ENCODE measurements at regions of chr6 and their contacts with region 1.

Region 1: DNA sequence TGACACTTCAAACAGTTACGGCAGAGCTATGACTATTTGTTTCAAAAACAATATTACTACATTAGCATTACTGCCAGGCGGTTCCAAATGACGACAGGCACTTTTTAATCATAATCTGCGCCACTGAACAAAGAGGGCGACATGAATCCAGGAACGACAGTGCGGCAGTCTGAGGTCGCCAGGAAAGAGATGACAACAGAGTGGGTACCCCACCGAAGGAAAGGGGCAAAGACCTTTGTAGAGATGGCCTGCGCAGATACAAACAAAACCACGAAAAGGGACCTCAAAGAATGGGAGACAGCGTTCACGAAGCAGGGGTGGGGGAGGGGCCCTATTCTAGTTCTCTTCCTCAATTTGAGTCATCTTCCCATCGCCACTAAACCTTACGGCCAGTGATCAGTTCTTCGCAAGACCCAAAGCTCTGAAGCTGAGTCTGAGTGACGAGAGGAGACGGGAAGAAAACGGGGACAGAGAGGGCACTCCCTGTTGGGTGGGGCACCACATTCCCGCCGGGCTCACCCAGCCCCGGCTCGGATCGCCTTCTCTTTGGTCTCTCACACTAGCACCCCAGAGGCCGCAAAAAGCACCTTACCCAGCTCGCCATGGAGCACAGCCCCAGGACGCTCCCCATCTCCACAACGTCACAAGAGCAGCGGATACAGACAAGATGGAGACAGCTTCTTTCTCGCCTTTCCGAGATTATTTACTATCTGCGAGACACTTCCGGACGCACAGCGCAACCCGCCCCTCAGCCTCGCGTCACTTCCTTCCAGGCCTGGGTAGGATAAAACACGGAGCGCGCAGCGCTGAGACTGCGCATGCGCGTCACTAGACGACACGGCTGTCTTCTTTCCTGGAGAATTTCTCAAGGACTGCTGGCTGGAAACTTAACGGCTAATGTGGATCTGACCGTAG is at the start of gene SERINC1:
- DNase-seq: peak; percentile 93 to 96 (median 95)
- H3K4me3 ChIP-seq: peak within 1 kb of the TSS; percentile 59 to 100 (median 89)
- H3K27ac ChIP-seq: peak within 1 kb of the TSS; percentile 63 to 99 (median 95)
- H3K27me3 ChIP-seq: no peaks in the 10 kb centered on the region
- CTCF ChIP-seq: peak in 25 of 56 donors; percentile 3 to 55 (median 21)
- total RNA-seq, gene SERINC1: 227 to 682 (median 537) TPM

Region 2: DNA sequence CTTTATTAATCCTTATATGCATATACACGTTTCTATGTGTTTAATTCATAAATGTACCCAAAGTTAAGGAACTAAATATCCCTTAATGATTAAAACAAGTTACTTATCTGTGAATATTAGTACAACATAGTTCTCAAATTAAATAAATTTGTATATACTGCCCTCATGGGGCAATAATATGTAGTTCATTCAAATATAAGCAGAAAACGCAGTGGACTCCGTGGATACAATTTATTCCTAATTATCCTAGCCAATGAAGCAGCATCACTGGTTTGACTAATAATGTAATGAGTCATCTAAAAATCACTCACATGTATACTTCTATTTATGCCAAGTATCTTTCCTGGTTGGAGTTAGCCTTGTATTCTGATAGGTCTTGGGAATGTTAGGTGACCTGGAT is 1248.7 kb before region 1 on chr6:
- intact Hi-C with region 1: no loop called
- DNase-seq: no peak
- H3K4me3 ChIP-seq: no peak overlapping the region
- H3K27ac ChIP-seq: no peak overlapping the region
- H3K27me3 ChIP-seq: no peaks in the 10 kb centered on the region
- CTCF ChIP-seq: peak in 53 of 56 donors; percentile 19 to 74 (median 49)

Region 3: DNA sequence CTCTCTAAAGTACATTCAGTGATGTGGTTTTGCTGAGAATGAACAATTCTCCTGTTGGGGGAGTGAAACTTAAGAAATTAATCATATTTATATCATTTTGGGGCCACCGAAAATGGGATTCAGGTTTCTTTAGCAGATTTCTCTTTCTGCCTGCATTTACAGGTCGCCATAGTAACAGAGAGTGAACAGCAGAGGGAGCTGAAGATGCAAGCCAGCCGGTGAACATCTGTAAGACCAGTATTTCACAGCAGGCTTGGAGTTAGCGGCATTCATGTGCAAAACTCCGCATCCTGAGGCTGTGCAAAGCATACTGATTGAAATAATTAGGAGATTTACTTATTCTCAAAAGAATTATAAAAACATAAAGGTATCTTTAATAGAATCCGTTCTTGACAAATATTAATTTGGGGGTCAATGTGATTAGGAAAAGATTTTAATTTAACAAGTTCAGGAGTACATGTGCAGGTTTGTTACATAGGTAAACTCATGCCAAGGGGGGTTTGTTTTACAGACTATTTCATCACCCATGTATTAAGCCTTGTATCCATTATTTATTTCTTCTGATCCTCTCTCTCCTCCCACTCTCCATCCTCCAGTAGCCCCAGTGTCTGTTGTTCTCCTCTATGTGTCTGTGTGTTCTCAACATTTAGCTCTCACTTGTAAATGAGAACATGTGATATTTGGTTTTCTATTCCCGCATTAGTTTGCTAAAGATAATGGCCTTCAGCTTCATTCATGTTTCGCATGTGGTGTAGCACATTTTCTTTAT is 89.7 kb before region 1 on chr6:
- intact Hi-C with region 1: loop called in 1 of 2 experiments (anchors 5 kb)
- DNase-seq: peak in 7 of 10 donors; percentile 15 to 61 (median 57)
- H3K4me3 ChIP-seq: peak overlapping the region in 3 of 59 donors; percentile 3 to 23 (median 19)
- H3K27ac ChIP-seq: no peak overlapping the region
- H3K27me3 ChIP-seq: no peaks in the 10 kb centered on the region
- CTCF ChIP-seq: peak; percentile 48 to 86 (median 77)

Region 4: DNA sequence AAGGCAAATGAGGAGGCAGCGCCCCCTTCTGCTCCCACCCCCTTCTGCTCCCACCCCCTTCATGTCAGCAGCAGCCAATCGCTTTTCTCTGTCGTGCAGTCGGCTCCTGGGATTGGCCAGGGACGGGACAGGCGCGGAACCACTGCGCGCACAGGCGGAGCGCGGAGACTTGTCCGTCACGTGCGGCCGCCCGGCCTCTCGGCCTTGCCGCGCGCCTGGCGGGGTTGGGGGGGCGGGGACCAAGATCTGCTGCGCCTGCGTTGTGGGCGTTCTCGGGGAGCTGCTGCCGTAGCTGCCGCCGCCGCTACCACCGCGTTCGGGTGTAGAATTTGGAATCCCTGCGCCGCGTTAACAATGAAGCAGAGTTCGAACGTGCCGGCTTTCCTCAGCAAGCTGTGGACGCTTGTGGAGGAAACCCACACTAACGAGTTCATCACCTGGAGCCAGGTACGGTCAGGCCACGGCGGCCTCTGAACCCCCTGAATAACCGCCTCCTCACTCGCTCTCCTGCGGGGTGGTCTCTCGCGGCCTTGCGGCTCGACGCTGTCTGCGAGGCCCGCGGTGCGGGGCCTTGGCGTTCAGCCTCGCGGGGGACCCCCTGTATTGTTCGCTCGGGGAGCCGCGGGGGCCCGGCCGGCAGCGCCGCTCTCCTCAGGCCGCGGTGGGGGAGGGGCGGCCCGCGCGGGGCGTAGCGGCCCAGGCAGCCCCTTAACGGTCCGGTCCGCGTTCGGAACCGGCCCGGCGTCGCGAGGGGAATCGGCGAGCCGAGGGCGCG is 71.8 kb before region 1 on chr6 and contains the start of gene HSF2:
- intact Hi-C with region 1: loop called (anchors 2 to 5 kb)
- DNase-seq: peak; percentile 95 to 98 (median 98)
- H3K4me3 ChIP-seq: peak within 1 kb of the TSS; percentile 68 to 100 (median 95)
- H3K27ac ChIP-seq: peak within 1 kb of the TSS; percentile 34 to 94 (median 87)
- H3K27me3 ChIP-seq: no peaks in the 10 kb centered on the region
- CTCF ChIP-seq: peak in 28 of 56 donors; percentile 3 to 73 (median 34)
- total RNA-seq, gene HSF2: 12.1 to 34.9 (median 23.0) TPM

Region 5: DNA sequence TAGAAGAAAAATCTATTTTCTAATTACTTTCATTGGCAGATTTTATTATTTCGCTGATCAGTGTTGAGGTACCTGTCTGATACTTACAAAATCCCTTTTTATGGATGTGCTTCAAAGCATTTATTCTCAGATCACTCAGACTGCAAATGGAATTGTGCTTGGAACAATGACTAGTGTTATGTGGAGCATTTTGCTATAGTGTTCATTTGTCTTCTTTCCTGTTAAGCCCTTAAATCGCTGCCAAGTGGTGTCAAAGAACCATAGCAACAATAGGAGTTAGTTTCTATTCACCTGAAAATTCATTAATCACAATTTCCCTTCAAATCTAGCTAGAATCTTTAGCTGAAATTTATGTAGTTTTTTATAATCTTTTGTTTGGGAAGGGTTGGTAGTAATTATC is 347.5 kb after region 1 on chr6:
- intact Hi-C with region 1: no loop called
- DNase-seq: no peak
- H3K4me3 ChIP-seq: peak overlapping the region in 2 of 59 donors; percentile 9 to 33
- H3K27ac ChIP-seq: peak overlapping the region in 39 of 59 donors; percentile 1 to 77 (median 48)
- H3K27me3 ChIP-seq: no peaks in the 10 kb centered on the region
- CTCF ChIP-seq: no peak